Right ventricle myocardium inferior (tissue), 1 donor: ENCODE measurements at regions of chr1 and their contacts with region 1.

Region 1: DNA sequence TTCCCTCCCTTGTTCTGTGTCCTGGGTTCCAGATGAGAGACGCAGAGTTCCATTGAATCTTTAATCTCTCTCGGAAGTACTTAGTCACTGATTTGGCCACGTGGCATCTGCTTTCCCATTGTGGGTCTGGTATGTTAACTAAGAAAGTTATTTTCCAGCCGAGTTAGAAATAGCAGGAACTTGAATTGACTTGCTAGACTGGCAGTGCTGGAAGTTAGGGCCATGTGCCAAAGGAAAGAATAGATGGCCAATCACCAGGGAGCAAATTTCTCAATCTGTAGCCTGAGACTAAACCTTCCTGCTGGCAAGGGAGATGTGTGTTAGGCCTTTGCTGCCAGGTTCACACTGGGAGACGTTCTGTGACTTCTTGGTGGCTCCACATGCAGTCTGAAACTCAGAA is 24.2 kb upstream of the SLFNL1 start:
- DNase-seq: no peak
- ATAC-seq: peak; percentile 83

Region 2: GRCh38 chr1:40774266-40774998 is 271.3 kb before region 1 on chr1:
- intact Hi-C with region 1: no loop called
- DNase-seq: peak; percentile 80
- ATAC-seq: peak; percentile 56

Region 3: DNA sequence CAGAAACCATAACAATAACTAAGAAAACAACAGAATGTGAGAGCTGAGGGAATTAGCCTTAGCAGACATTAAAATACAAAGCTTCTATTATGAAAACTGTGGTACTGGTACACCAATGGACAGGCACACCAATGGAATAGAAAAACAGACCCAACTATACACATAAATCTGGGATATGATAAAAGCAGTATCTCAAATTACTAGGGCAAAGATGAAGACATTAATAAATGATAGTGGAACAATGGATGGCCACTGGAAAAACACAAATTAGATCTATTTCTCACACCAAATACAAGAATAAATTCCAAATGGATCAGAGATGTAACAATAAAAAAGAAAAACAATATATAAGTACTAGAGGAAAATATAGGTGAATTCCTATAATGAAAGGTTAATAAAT is 41.2 kb after region 1 on chr1:
- intact Hi-C with region 1: no loop called
- DNase-seq: no peak
- ATAC-seq: no peak

Region 4: DNA sequence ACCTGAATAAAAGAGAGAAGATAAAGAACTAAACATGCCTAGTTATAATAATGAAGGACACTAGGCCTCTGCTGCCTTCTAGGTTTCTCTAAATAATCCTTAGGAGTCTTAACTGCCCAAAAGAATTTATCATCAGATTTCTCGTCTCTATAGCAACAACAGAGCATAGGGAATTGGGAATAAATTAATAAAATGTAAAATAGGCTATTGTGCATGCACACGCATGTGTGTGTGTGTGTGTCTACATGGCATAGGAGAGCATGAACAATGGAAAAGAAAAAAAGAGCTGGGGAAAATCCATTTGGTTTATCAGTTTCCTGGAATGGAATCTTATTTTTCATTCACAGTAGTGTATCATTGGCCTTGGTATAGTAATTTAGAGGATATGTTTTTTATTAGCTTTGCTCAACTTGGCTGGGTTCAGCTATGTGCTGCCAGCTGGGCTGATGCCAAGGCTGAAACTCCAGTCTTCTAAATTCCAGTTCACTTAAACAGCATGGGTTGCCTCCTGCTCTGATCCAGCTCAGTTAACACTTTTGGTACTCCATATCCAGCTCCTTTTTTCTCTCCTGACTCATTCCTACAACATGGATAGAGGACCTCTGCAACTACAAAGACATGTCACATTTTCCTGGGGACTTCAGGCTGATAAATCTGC is 56.3 kb after region 1 on chr1:
- intact Hi-C with region 1: loop called (anchors 5 kb)
- DNase-seq: peak; percentile 82
- ATAC-seq: peak; percentile 92

Region 5: GRCh38 chr1:41135196-41135947 is 89.6 kb after region 1 on chr1:
- intact Hi-C with region 1: no loop called
- DNase-seq: no peak
- ATAC-seq: no peak